Natural killer cell (primary cell): ENCODE measurements at regions of chr1 and their contacts with region 1.

Region 1: DNA sequence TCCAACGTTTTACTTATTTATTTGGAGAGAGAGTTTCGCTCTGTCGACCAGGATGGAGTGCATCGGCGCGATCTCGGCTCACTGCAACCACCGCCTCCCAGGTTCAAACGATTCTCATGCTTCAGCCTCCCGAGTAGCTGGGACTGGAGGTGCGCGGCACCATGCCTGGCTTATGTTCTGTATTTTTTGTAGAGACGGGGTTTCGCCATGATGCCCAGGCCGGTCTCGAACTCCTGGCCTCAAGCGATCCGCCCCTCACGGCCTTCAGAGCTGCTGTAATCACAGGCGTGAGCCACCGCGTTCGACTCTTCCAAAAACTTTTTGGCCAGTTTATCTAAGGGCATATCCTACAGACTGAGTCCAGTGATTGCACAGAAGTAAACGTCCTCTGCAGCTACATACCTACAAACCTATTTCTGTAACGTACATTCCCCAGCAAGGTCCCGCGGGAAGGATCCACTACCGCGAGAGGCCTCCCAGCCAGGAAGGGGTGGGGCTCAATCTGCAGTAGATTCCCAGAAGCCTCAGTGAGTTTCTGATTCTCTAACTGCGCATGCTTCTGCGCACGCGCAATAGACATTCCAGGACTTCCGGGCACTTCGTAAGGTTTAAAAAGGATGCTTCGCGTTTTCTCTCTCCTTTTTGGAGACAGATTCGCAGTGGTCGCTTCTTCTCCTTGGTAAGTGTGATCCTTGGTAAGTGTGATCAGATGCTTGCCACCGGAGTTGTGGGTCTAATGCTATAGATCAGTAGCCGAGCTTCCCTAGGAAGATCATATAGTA is at the start of gene RCC1:
- DNase-seq: peak; percentile 87 to 99
- ATAC-seq: peak; percentile 93 to 96 (median 95)
- H3K4me3 ChIP-seq: peak within 1 kb of the TSS; percentile 80
- H3K4me3 Mint-ChIP-seq: peak within 1 kb of the TSS; percentile 99
- H3K27ac ChIP-seq: peak within 1 kb of the TSS; percentile 77
- H3K27ac Mint-ChIP-seq: peak within 1 kb of the TSS; percentile 97 to 99
- H3K4me1 ChIP-seq: peaks cover 43% of the 10 kb centered on the region
- H3K4me1 Mint-ChIP-seq: peaks cover 47 to 50% of the 10 kb centered on the region in 2 donors
- H3K27me3 ChIP-seq: no peaks in the 10 kb centered on the region
- H3K27me3 Mint-ChIP-seq: no peaks in the 10 kb centered on the region
- CTCF ChIP-seq: no peak
- total RNA-seq, gene RCC1: 15.9 to 23.7 (median 19.2) TPM

Region 2: GRCh38 chr1:28259307-28260167 is 246.1 kb before region 1 on chr1 and contains the start of gene SESN2:
- intact Hi-C with region 1: no loop called
- DNase-seq: peak; percentile 99
- ATAC-seq: peak; percentile 95 to 98 (median 95)
- H3K4me3 ChIP-seq: peak within 1 kb of the TSS; percentile 75
- H3K4me3 Mint-ChIP-seq: peak within 1 kb of the TSS; percentile 84
- H3K27ac ChIP-seq: peak within 1 kb of the TSS; percentile 36
- H3K27ac Mint-ChIP-seq: peak within 1 kb of the TSS; percentile 62 to 87
- H3K4me1 ChIP-seq: peaks cover 52% of the 10 kb centered on the region
- H3K4me1 Mint-ChIP-seq: peaks cover 40 to 49% of the 10 kb centered on the region in 2 donors
- H3K27me3 ChIP-seq: no peaks in the 10 kb centered on the region
- H3K27me3 Mint-ChIP-seq: no peaks in the 10 kb centered on the region
- CTCF ChIP-seq: no peak
- total RNA-seq, gene SESN2: 21.0 to 30.3 (median 27.1) TPM

Region 3: GRCh38 chr1:28329395-28330153 is 176.0 kb before region 1 on chr1:
- intact Hi-C with region 1: loop called (anchors 1 kb)
- DNase-seq: peak in 1 of 2 donors; percentile 68
- ATAC-seq: peak in 2 of 3 donors; percentile 3 to 14
- H3K4me3 ChIP-seq: peak overlapping the region; percentile 57
- H3K4me3 Mint-ChIP-seq: peak overlapping the region; percentile 97
- H3K27ac ChIP-seq: peak overlapping the region; percentile 87
- H3K27ac Mint-ChIP-seq: peak overlapping the region; percentile 97
- H3K4me1 ChIP-seq: peaks cover 26% of the 10 kb centered on the region
- H3K4me1 Mint-ChIP-seq: peaks cover 25 to 43% of the 10 kb centered on the region in 2 donors
- H3K27me3 ChIP-seq: no peaks in the 10 kb centered on the region
- H3K27me3 Mint-ChIP-seq: no peaks in the 10 kb centered on the region
- CTCF ChIP-seq: no peak

Region 4: DNA sequence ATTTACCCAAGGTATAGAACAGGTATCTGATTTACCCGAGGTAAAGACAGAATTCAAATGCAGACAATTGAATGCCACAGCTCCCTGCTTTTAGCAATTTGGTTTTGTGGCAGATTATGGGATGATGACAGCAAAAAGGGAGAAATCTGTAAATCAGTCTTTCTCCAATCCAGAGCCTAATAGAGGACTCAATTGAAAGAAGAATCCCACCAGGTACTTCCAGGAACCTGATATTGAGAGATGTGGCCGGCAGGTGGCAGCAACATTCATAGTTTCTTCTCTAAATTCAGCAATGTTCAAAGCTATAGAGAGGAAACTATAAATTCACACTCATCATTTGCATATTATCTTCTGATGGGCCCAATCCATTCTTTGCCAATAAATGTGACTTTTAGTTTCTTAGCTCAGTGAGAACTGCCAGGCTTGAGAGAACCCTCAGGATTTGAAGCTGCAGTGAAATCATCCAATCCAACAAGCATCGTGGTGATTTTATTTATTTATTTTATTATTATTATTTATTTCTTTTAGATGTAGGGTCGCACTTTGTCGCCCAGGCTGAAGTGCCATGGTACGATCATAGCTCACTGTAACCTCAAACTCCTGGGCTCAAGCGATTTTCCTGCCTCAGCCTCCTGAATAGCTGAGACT is 145.9 kb before region 1 on chr1:
- intact Hi-C with region 1: loop called (anchors 5 kb)
- DNase-seq: peak; percentile 65 to 84
- ATAC-seq: peak; percentile 55 to 92 (median 72)
- H3K4me3 ChIP-seq: no peak overlapping the region
- H3K4me3 Mint-ChIP-seq: no peak overlapping the region
- H3K27ac ChIP-seq: no peak overlapping the region
- H3K27ac Mint-ChIP-seq: no peak overlapping the region
- H3K4me1 ChIP-seq: peaks cover 11% of the 10 kb centered on the region
- H3K4me1 Mint-ChIP-seq: peaks cover 5 to 10% of the 10 kb centered on the region in 2 donors
- H3K27me3 ChIP-seq: no peaks in the 10 kb centered on the region
- H3K27me3 Mint-ChIP-seq: peaks cover 0 to 3% of the 10 kb centered on the region in 2 donors
- CTCF ChIP-seq: peak; percentile 84

Region 5: DNA sequence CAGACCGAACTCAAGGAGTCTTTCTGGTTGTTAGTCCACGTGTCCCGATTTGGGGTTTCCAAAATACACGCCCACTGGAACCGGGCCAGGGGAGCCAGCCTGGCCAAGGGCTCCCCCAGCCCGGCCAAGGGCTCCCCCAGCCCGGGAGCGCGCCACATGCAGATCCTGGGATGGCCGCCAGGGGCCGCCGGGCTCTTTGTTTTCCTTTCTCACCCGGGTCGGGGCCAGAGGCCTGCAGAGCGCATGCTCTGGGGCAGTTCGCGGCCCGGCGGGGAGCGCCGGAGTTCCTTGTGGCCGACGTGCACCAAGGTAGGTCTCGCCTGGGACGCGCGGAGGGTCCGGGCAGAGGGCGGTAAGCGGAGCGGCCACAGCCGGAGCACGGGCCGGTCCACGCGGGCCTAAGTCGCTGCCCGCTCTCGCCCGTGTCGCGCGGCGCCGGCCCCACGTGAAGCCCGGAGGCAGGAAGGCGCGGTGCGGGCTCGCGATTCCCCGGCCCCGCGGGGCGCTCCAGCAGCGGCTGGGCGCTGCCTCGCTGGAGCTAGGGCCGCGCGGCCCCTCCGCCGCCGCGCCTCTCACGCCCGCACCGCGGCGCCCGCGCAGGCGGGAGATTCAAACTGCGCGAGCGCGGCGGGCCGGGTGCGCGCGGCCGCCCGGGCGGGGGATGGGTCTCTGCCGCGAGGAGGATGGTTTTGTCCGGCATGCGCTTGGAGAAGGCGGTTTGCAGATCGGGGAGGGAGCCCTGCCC is 12.6 kb after region 1 on chr1:
- intact Hi-C with region 1: loop called (anchors 2 kb)
- DNase-seq: peak; percentile 88 to 91
- ATAC-seq: peak; percentile 81 to 91 (median 83)
- H3K4me3 ChIP-seq: peak overlapping the region; percentile 46
- H3K4me3 Mint-ChIP-seq: peak overlapping the region; percentile 93
- H3K27ac ChIP-seq: peak overlapping the region; percentile 34
- H3K27ac Mint-ChIP-seq: peak overlapping the region; percentile 69 to 90
- H3K4me1 ChIP-seq: peaks cover 19% of the 10 kb centered on the region
- H3K4me1 Mint-ChIP-seq: peaks cover 15 to 22% of the 10 kb centered on the region in 2 donors
- H3K27me3 ChIP-seq: no peaks in the 10 kb centered on the region
- H3K27me3 Mint-ChIP-seq: no peaks in the 10 kb centered on the region
- CTCF ChIP-seq: peak; percentile 97

Region 6: DNA sequence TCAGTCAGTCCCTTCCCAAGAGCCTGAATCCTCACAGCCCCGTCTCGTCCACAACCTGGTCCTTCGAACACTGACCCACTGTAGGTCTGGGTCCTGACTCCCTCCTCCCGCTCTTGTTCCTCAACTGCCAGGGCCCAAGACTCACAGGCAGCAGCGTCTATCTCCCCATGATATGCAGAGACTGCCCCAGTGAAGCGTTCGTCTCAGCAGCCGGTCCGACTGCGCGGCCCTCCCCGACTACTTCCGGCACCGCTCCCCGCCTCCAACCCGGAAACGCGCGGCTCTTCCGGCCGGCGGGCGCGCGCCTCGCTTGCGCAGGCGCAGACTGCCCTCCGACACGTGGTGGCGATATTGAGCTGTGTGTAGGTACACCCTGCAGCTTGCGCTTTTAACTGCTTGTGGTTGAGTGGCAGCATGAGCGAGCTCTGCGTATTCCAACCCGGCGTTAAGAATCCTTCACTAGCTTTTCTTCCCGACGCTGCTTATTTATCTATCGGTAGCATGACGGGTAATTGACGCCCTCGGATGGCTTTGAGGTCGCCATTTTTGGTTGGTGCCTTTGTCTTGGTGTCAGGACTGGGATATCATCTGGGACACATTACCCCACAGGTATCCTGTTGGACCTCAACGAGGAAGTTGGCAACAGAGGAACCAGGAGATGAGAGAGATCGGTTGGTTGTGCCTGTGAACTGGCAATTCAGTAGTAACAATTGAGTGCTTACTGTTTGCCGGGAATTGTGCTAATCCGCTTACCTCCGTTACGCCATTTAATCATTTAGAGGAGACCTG is 137.4 kb after region 1 on chr1 and contains the start of gene TAF12:
- intact Hi-C with region 1: loop called (anchors 5 kb)
- DNase-seq: peak; percentile 82 to 98
- ATAC-seq: peak; percentile 78 to 93 (median 85)
- H3K4me3 ChIP-seq: peak within 1 kb of the TSS; percentile 71
- H3K4me3 Mint-ChIP-seq: peak within 1 kb of the TSS; percentile 100
- H3K27ac ChIP-seq: peak within 1 kb of the TSS; percentile 98
- H3K27ac Mint-ChIP-seq: peak within 1 kb of the TSS; percentile 98 to 99
- H3K4me1 ChIP-seq: peaks cover 34% of the 10 kb centered on the region
- H3K4me1 Mint-ChIP-seq: peaks cover 36 to 46% of the 10 kb centered on the region in 2 donors
- H3K27me3 ChIP-seq: no peaks in the 10 kb centered on the region
- H3K27me3 Mint-ChIP-seq: no peaks in the 10 kb centered on the region
- CTCF ChIP-seq: peak; percentile 15
- total RNA-seq, gene TAF12: 17.9 to 23.8 (median 23.1) TPM